ENCODE measurements at regions of chr6 and their contacts with region 1.

Region 1: DNA sequence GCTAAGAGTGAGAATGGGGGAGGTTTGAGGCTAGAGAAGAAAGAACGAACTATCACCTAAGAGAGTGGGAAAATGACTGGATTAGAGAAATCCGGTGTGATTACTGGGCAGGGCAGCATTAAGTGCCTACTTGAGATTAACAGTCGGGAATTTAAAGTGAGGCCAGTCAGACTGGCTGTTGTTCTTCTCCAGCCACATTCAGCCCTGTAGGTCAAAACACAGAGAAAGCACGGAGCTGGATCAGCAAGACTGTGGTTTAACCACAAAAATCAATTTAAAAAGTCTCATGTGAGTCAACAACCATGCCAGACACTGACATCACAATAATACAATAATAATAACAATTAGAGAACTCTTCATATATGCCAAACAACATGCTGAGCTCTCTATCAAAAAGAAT is 301.9 kb upstream of the SGK1 start:
- DNase-seq: no peak
- H3K4me3 ChIP-seq: no peak overlapping the region
- CTCF ChIP-seq: no peak
- POLR2A ChIP-seq: no peak

Region 2: DNA sequence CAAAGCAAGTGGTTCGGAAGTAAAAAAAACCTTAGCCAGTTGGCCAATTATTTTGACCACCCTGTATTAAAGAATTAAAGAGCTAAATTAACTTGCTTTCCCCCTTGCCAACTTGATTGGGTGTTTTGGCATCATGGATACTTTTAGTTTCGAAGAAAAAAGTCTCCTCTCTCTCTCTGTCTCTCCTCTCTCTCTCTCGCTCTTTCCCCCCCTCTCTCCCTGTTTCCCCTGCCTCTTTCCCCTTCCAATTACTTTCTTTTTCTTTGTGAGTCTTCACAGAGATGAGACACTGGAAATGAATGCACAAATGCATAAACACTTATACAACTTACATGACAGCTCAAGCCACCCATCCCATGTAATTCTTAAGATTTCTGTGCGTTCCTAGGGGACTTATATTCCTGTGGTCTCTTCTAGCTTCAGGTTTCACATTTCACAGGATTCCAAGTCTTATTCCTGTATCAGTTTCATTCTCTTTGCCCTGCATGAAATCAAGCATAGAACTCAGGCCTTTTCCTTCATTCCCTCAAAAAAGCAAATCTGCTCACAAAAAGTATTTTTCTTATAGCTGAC is 1411.5 kb before region 1 on chr6:
- intact Hi-C with region 1: loop called (anchors 5 kb)
- DNase-seq: no peak
- H3K4me3 ChIP-seq: no peak overlapping the region
- CTCF ChIP-seq: no peak
- POLR2A ChIP-seq: no peak

Measured in lower leg skin (tissue), 4 donors.